ENCODE measurements at regions of chr13 and their contacts with region 1.

Region 1: GRCh38 chr13:95603887-95604533 is 40.5 kb downstream of the DZIP1 start:
- DNase-seq: peak; percentile 85
- ATAC-seq: peak; percentile 96
- H3K4me3 ChIP-seq: no peak overlapping the region
- H3K27ac ChIP-seq: peak overlapping the region; percentile 79
- H3K4me1 ChIP-seq: peaks cover 25% of the 10 kb centered on the region
- H3K27me3 ChIP-seq: no peaks in the 10 kb centered on the region
- CTCF ChIP-seq: no peak

Region 2: DNA sequence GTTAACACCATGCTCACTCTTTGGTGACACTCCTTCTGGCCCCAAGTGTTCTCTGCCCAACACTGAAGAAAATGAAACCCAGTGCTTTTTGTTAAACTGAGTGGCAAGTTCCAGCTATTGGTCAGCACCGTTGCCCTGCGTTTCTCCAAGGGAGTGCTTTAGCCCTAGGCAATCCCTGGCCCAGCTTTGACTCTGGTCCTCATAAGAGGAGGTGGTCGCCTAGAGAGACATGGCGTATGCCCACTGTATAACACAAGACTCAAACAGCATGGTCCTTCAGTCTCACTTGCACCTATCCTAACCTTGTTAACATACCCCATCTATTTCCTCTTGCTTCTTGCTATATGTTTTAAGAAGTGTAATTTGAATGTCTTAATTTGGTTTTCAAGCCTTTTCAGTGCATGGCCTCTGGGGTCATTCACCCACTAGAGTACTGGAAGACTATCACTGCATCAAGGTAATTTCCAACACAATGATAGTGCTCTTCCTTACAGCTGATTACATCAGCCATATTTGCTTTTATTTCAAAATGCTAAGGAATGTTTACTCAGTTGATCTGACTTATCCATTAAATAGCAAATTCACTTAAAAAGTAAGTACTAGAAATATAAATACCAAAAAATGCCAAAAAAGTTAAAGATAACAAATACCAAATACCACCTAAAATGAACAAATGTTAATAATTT is 701.1 kb before region 1 on chr13:
- CTCF ChIA-PET with region 1: no interaction called
- POLR2A ChIA-PET with region 1: interaction called, 12 read pairs
- intact Hi-C with region 1: no loop called
- DNase-seq: no peak
- ATAC-seq: no peak
- H3K4me3 ChIP-seq: no peak overlapping the region
- H3K27ac ChIP-seq: no peak overlapping the region
- H3K4me1 ChIP-seq: no peaks in the 10 kb centered on the region
- H3K27me3 ChIP-seq: no peaks in the 10 kb centered on the region
- CTCF ChIP-seq: no peak

Region 3: GRCh38 chr13:95426636-95427035 is 177.4 kb before region 1 on chr13:
- CTCF ChIA-PET with region 1: interaction called, 16 read pairs
- POLR2A ChIA-PET with region 1: no interaction called
- intact Hi-C with region 1: no loop called
- DNase-seq: no peak
- ATAC-seq: no peak
- H3K4me3 ChIP-seq: no peak overlapping the region
- H3K27ac ChIP-seq: no peak overlapping the region
- H3K4me1 ChIP-seq: no peaks in the 10 kb centered on the region
- H3K27me3 ChIP-seq: no peaks in the 10 kb centered on the region
- CTCF ChIP-seq: no peak

Region 4: DNA sequence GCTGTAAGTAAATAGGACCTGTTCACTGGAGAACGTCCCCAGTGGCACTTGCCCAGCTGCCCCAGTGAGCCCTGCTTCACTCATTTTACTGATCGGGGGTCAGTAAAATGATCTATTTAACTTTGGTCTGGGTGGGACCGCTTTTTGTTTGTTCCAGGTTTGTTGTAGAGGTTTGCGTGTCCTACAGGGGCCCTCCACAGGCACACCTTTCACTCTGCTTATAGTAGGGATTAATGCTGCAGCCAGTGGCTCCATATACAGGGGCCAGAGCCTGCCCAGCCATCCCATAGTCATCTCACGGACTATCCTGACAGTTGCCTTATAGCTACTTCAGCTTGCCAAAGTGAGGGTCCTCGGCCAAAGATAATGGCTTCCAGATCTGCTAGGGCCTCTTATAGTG is 177.0 kb after region 1 on chr13:
- CTCF ChIA-PET with region 1: no interaction called
- POLR2A ChIA-PET with region 1: no interaction called
- intact Hi-C with region 1: no loop called
- DNase-seq: no peak
- ATAC-seq: no peak
- H3K4me3 ChIP-seq: no peak overlapping the region
- H3K27ac ChIP-seq: no peak overlapping the region
- H3K4me1 ChIP-seq: peaks cover 17% of the 10 kb centered on the region
- H3K27me3 ChIP-seq: no peaks in the 10 kb centered on the region
- CTCF ChIP-seq: no peak

Measured in PC-3 (cell line).